GM10248 (cell line): ENCODE measurements at regions of chr6 and their contacts with region 1.

Region 1: GRCh38 chr6:25263657-25264056 is 15.5 kb upstream of the CARMIL1 start:
- DNase-seq: no peak
- CTCF ChIP-seq: no peak

Region 2: GRCh38 chr6:25138237-25139125 is 125.2 kb before region 1 on chr6:
- CTCF ChIA-PET with region 1: no interaction called
- POLR2A ChIA-PET with region 1: no interaction called
- DNase-seq: peak; percentile 29
- CTCF ChIP-seq: peak; percentile 20

Region 3: GRCh38 chr6:25250878-25251277 is 12.8 kb before region 1 on chr6:
- CTCF ChIA-PET with region 1: interaction called, 68 read pairs
- POLR2A ChIA-PET with region 1: no interaction called
- DNase-seq: peak; percentile 29
- CTCF ChIP-seq: no peak

Region 4: DNA sequence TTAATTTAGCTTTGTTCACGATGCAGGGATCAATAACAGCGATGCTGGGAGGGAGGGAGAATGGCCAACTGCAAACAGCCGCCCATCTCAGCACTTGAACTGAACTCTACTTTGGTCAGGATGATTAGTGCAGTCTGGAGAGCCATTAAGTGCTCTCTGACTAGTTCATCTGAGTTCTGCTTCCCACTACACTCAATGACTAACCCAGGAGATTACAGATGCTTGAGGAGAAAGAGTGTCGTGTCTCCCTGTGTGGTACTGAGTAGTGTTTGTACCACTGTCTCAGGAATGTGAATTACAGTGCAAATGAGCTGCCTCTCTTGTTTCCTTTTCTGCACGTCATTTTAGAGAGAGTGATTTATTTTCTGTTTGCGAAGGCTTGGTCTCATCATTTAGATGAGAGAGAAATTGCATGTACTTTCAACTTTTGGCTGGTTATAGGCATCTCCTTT is 39.0 kb after region 1 on chr6:
- CTCF ChIA-PET with region 1: interaction called, 3 read pairs
- POLR2A ChIA-PET with region 1: interaction called, 11 read pairs
- DNase-seq: no peak
- CTCF ChIP-seq: no peak

Region 5: GRCh38 chr6:25504661-25505060 is 241.0 kb after region 1 on chr6:
- CTCF ChIA-PET with region 1: interaction called, 15 read pairs
- POLR2A ChIA-PET with region 1: no interaction called
- DNase-seq: no peak
- CTCF ChIP-seq: no peak

Region 6: DNA sequence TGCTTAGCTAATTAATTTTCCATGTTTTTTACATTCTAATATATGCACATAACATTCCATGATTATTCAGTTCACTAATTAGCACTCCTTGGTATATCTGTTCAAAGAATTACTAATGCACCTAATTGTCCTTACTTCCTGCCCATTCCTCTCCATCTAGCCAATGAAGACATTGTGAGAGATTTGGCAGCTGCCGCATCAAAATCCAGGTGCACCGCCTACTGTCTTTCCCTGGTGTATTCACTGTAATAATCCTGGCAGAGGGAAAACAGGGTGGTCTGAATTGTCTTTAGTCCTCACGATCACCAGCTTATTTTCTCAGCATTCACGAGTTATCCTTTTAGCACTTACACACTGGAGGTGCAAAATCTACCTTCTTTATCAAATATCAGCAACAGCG is 327.3 kb after region 1 on chr6:
- CTCF ChIA-PET with region 1: interaction called, 18 read pairs
- POLR2A ChIA-PET with region 1: no interaction called
- DNase-seq: no peak
- CTCF ChIP-seq: no peak